ENCODE measurements at regions of chr13 and their contacts with region 1.

Region 1: GRCh38 chr13:74104661-74105275 is 29.4 kb downstream of the KLF12 start:
- DNase-seq: no peak
- H3K27ac ChIP-seq: no peak overlapping the region
- CTCF ChIP-seq: no peak

Region 2: DNA sequence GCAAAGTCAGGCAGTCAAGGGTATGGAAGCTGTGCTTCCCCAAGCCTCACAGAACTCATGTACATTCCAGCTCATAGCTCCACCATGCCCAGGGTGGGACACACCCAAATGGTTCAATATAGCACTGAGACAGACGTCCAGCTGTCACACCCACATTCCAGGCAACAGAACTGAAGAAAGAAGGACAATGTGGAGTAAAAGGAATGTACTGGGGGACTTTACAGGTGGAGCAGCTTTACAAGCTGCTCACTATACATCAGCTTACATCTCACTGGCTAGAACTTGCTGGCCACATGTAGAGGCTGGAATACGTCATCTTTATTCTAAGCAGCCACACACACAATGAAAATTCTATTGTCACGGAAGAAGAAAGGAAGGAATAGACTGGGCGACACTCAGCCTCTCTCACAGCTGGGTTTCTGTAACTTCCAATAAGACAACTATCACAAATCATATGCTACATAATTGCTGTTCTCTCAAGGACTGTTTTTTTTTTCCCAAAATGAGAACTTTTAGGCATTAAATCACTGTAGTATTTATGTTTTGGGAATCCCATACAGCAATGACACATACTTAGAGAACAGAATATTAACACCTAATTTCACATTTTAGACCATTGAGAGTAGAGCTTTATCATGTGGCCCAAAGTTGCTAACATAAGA is 56.7 kb before region 1 on chr13:
- CTCF ChIA-PET with region 1: interaction called, 10 read pairs
- POLR2A ChIA-PET with region 1: no interaction called
- DNase-seq: peak; percentile 45
- H3K27ac ChIP-seq: no peak overlapping the region
- CTCF ChIP-seq: no peak

Region 3: GRCh38 chr13:74070065-74070464 is 34.7 kb before region 1 on chr13:
- CTCF ChIA-PET with region 1: no interaction called
- POLR2A ChIA-PET with region 1: no interaction called
- DNase-seq: no peak
- H3K27ac ChIP-seq: no peak overlapping the region
- CTCF ChIP-seq: no peak

Region 4: DNA sequence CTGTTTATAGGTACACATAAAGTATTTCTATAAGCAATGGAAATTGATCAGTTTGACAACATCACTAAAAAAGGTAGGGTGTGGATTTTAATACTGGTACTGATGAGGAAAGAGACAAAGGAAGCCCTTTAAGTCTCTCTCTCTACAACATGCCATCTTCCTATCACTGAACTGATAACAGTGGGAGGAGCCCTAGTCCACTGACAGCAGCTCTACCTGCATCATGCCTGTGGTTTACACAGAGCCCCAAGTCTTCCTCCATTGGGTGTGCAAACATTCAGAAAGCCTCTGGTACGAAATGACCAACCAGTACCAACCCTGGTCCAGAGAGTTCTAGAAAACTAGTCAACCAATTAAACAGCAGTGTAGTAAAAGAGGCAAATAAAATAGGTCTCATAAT is 24.0 kb before region 1 on chr13:
- CTCF ChIA-PET with region 1: no interaction called
- POLR2A ChIA-PET with region 1: no interaction called
- DNase-seq: no peak
- H3K27ac ChIP-seq: no peak overlapping the region
- CTCF ChIP-seq: no peak

Region 5: GRCh38 chr13:74567485-74567884 is 462.7 kb after region 1 on chr13:
- CTCF ChIA-PET with region 1: no interaction called
- POLR2A ChIA-PET with region 1: no interaction called
- DNase-seq: no peak
- H3K27ac ChIP-seq: no peak overlapping the region
- CTCF ChIP-seq: no peak

Measured in RWPE1 (cell line).